Endothelial cell of umbilical vein (primary cell): ENCODE measurements at regions of chr22 and their contacts with region 1.

Region 1: GRCh38 chr22:22884010-22884887 is 3.4 kb upstream of the IGLL5 start:
- DNase-seq: peak; percentile 52
- H3K4me3 ChIP-seq: no peak overlapping the region
- H3K27ac ChIP-seq: no peak overlapping the region
- H3K4me1 ChIP-seq: no peaks in the 10 kb centered on the region
- H3K27me3 ChIP-seq: no peaks in the 10 kb centered on the region
- CTCF ChIP-seq: peak; percentile 42 to 75
- POLR2A ChIP-seq: no peak

Region 2: GRCh38 chr22:22591348-22592299 is 292.6 kb before region 1 on chr22:
- CTCF ChIA-PET with region 1: interaction called, 19 read pairs
- POLR2A ChIA-PET with region 1: no interaction called
- dilution Hi-C with region 1: no loop called
- intact Hi-C with region 1: no loop called
- DNase-seq: no peak
- H3K4me3 ChIP-seq: no peak overlapping the region
- H3K27ac ChIP-seq: no peak overlapping the region
- H3K4me1 ChIP-seq: no peaks in the 10 kb centered on the region
- H3K27me3 ChIP-seq: no peaks in the 10 kb centered on the region
- CTCF ChIP-seq: peak in 1 of 2 donors; percentile 6
- POLR2A ChIP-seq: no peak

Region 3: GRCh38 chr22:22748297-22748743 is 135.9 kb before region 1 on chr22:
- CTCF ChIA-PET with region 1: interaction called, 25 read pairs
- POLR2A ChIA-PET with region 1: no interaction called
- dilution Hi-C with region 1: no loop called
- intact Hi-C with region 1: no loop called
- DNase-seq: peak; percentile 38
- H3K4me3 ChIP-seq: no peak overlapping the region
- H3K27ac ChIP-seq: no peak overlapping the region
- H3K4me1 ChIP-seq: no peaks in the 10 kb centered on the region
- H3K27me3 ChIP-seq: no peaks in the 10 kb centered on the region
- CTCF ChIP-seq: peak; percentile 68 to 77
- POLR2A ChIP-seq: no peak

Region 4: DNA sequence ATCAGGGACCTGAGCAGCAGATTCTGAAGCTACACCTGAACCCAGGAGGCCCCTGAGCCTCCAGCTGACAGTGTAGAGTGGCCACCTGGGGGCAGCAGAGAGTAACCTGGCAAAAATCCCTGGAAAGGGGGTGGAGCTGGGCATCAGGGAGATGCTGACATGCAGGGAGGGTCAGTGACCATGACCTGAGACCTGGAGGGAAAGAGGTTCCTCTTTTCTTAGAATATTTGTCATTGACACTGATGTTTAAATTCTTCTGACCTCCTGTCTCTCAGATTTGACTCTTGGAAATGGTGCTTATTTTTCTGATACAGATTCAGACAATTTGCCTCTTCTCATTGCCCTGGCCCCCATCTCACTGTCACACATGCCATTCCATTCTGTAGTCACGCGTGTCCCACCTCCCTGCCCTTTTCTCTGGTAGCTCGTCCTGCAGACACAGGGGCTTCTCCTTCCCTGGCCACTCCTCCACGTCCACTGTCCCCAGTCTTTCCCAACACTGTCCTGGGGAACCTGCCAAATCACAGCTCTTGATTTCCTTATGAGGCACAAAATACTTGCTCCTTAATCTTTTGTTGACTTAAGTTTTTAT is 113.9 kb before region 1 on chr22:
- CTCF ChIA-PET with region 1: interaction called, 45 read pairs
- POLR2A ChIA-PET with region 1: no interaction called
- dilution Hi-C with region 1: no loop called
- intact Hi-C with region 1: no loop called
- DNase-seq: peak; percentile 48
- H3K4me3 ChIP-seq: no peak overlapping the region
- H3K27ac ChIP-seq: no peak overlapping the region
- H3K4me1 ChIP-seq: no peaks in the 10 kb centered on the region
- H3K27me3 ChIP-seq: peaks cover 2 to 5% of the 10 kb centered on the region in 2 experiments
- CTCF ChIP-seq: peak; percentile 76 to 78
- POLR2A ChIP-seq: no peak

Region 5: GRCh38 chr22:22802339-22802970 is 81.8 kb before region 1 on chr22:
- CTCF ChIA-PET with region 1: interaction called, 10 read pairs
- POLR2A ChIA-PET with region 1: no interaction called
- dilution Hi-C with region 1: no loop called
- intact Hi-C with region 1: no loop called
- DNase-seq: no peak
- H3K4me3 ChIP-seq: no peak overlapping the region
- H3K27ac ChIP-seq: no peak overlapping the region
- H3K4me1 ChIP-seq: no peaks in the 10 kb centered on the region
- H3K27me3 ChIP-seq: peaks cover 8% of the 10 kb centered on the region in 2 experiments
- CTCF ChIP-seq: peak in 1 of 2 donors; percentile 18
- POLR2A ChIP-seq: no peak

Region 6: DNA sequence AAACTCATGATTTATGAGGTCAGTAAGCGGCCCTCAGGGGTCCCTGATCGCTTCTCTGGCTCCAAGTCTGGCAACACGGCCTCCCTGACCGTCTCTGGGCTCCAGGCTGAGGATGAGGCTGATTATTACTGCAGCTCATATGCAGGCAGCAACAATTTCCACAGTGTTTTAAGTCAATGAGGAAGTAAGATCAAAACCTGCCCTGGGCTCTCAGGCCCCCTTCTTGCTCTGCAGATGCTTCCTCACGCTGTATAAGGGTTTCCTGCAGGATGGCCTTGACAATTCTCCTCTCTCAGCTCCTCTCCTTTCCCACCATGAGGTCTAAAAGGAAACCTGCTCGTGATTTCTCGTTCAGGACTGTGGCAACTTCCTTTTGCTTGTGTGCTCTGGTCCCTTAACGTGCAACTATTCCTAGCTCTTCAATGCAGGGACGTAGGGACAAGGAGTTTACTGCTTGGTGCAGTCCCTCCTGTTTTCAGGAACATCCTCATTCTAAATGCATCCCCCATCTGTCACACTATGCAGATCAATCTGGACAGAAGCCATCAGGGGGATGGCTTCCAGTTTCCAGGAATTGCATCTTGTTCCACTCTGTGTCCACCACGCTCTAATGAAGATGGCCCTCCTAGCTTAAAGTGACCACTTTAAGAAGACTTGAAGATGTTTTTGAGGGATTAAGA is 61.0 kb before region 1 on chr22:
- CTCF ChIA-PET with region 1: no interaction called
- POLR2A ChIA-PET with region 1: no interaction called
- dilution Hi-C with region 1: no loop called
- intact Hi-C with region 1: no loop called
- DNase-seq: no peak
- H3K4me3 ChIP-seq: no peak overlapping the region
- H3K27ac ChIP-seq: no peak overlapping the region
- H3K4me1 ChIP-seq: no peaks in the 10 kb centered on the region
- H3K27me3 ChIP-seq: no peaks in the 10 kb centered on the region
- CTCF ChIP-seq: no peak
- POLR2A ChIP-seq: no peak

Region 7: GRCh38 chr22:22848364-22848866 is 35.8 kb before region 1 on chr22:
- CTCF ChIA-PET with region 1: interaction called, 64 read pairs
- POLR2A ChIA-PET with region 1: no interaction called
- dilution Hi-C with region 1: no loop called
- intact Hi-C with region 1: loop called (anchors 1 kb)
- DNase-seq: peak; percentile 40
- H3K4me3 ChIP-seq: no peak overlapping the region
- H3K27ac ChIP-seq: no peak overlapping the region
- H3K4me1 ChIP-seq: no peaks in the 10 kb centered on the region
- H3K27me3 ChIP-seq: peaks cover 3 to 25% of the 10 kb centered on the region in 2 experiments
- CTCF ChIP-seq: peak; percentile 90 to 93
- POLR2A ChIP-seq: no peak

Region 8: DNA sequence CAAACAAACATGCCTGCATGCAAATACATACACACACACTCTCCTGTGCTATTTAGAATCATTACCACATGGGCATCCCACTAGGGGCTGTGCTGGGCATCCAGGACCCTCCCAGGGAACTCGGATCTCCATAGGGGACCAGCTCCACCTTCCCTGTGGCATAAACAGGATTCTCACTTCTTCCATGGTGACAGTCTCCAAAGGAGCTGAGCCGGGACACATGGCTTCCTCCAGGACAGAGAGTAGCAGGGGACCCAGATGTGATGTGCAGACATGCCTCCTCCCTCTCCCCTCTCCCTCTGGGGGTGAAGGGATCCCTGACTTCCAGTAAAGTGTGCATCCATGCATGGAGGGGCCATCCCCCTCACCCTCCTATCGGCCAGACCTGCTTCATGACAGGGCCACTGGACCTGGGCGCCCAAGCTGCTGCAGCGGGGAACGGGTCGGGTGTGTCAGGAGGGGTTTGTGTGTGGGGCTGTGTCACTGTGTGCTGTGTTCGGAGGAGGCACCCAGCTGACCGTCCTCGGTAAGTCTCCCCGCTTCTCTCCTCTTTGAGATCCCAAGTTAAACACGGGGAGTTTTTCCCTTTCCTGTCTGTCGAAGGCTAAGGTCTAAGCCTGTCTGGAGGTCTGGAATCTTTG is 36.8 kb after region 1 on chr22:
- CTCF ChIA-PET with region 1: no interaction called
- POLR2A ChIA-PET with region 1: no interaction called
- dilution Hi-C with region 1: no loop called
- intact Hi-C with region 1: no loop called
- DNase-seq: no peak
- H3K4me3 ChIP-seq: no peak overlapping the region
- H3K27ac ChIP-seq: no peak overlapping the region
- H3K4me1 ChIP-seq: no peaks in the 10 kb centered on the region
- H3K27me3 ChIP-seq: no peaks in the 10 kb centered on the region
- CTCF ChIP-seq: no peak
- POLR2A ChIP-seq: no peak